ENCODE measurements at regions of chr1 and their contacts with region 1.

Region 1: DNA sequence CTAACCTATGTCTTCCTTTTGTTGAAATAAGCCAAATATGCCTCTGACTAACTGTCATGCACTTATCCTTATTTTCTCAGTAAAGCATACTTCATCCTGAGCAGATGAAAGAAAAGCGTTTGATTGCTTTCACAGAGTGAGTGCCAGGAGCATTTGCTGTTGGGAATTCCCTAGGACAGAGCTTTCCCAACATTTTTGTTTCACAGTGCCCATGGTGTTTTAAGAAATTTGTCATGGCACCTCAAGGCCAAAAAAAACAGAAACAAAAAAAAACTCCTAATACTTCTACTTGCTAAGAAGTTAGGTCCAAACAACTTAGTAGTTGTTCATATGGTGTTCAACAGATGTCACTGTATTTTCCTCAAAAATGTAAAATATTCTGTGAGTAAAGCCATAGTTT is 120.8 kb upstream of the BMP8A start:
- DNase-seq: no peak
- ATAC-seq: no peak
- H3K4me3 ChIP-seq: no peak overlapping the region
- H3K27ac ChIP-seq: peak overlapping the region in 1 of 12 donors; percentile 63
- H3K4me1 ChIP-seq: peaks cover 0 to 10% (median 1%) of the 10 kb centered on the region in 12 donors
- H3K27me3 ChIP-seq: no peaks in the 10 kb centered on the region
- CTCF ChIP-seq: no peak
- POLR2A ChIP-seq: no peak

Region 2: DNA sequence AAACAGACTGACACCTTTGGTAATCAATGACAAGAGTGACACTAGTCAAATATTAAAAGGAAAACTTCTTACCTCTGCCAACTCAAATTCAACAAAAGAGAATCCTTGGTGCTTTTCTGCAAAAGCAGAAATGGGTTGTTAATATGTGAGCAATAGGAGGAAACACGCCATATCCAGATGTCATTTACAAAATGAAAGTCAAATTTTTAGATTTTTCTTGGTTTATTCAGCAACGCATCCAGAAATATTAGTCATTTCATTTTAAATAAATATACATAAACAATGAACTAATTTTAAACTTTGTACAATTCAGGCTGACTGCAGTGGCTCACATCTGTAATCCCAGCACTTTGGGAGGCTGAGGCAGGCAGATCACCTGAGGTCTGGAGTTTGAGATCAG is 183.7 kb after region 1 on chr1:
- intact Hi-C with region 1: loop called in 1 of 10 experiments (anchors 5 kb)
- DNase-seq: no peak
- ATAC-seq: no peak
- H3K4me3 ChIP-seq: no peak overlapping the region
- H3K27ac ChIP-seq: no peak overlapping the region
- H3K4me1 ChIP-seq: peaks cover 0 to 4% (median 0%) of the 10 kb centered on the region in 12 donors
- H3K27me3 ChIP-seq: no peaks in the 10 kb centered on the region
- CTCF ChIP-seq: no peak
- POLR2A ChIP-seq: no peak

Region 3: GRCh38 chr1:39973503-39974135 is 603.0 kb after region 1 on chr1:
- intact Hi-C with region 1: no loop called
- DNase-seq: peak; percentile 55 to 85 (median 75)
- ATAC-seq: peak; percentile 63 to 86 (median 84)
- H3K4me3 ChIP-seq: no peak overlapping the region
- H3K27ac ChIP-seq: no peak overlapping the region
- H3K4me1 ChIP-seq: peaks cover 0 to 5% (median 0%) of the 10 kb centered on the region in 12 donors
- H3K27me3 ChIP-seq: no peaks in the 10 kb centered on the region
- CTCF ChIP-seq: peak; percentile 93 to 99 (median 96)
- POLR2A ChIP-seq: no peak

Measured in heart left ventricle (tissue), 16 donors.